Activated CD4-positive, alpha-beta T cell treated with anti-CD3 and anti-CD28 coated beads for 36 hours (primary cell): ENCODE measurements at regions of chr12 and their contacts with region 1.

Region 1: DNA sequence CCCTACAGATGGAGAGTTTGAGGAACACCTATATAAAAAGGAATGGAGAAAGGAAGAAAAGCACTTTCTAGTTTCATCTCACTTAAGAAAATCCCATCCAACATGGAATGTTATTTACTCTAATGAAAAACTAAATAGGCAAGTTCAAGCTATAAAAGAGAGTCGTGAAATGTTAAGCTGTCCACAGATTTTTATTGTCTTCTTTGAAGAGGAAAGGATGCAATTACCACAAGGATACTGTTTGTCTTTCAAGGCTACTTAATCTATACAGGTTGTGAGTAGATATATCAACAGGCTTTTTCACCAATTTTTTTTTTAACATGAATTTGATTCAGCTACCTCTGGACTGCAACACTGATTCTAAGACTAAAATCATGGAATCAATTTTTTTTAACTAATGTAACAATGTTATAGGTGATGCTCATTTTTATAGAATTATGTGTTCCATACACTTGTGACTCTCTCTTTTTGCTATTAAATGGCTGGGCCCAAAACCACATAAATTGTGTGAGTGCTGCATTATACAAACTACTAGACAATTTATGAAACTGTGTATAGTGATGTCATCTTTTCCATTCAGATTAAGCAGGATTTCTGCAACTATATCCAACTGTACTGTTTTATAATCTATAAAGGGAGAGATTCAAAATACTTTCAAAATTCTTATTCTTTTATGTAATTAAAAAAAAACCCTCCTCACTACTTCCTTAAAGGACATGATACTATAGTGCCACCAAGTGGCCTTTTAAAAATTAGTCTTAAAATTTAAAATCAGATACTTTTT is 26.8 kb upstream of the BMAL2 start:
- DNase-seq: no peak
- ATAC-seq: no peak
- H3K4me3 Mint-ChIP-seq: no peak overlapping the region
- H3K27ac Mint-ChIP-seq: no peak overlapping the region
- H3K4me1 Mint-ChIP-seq: peaks cover 5% of the 10 kb centered on the region
- H3K27me3 Mint-ChIP-seq: no peaks in the 10 kb centered on the region

Region 2: GRCh38 chr12:26937875-26938700 is 367.8 kb before region 1 on chr12 and contains the starts of genes FGFR1OP2 and INTS13:
- CTCF ChIA-PET with region 1: interaction called, 3 read pairs
- POLR2A ChIA-PET with region 1: no interaction called
- intact Hi-C with region 1: loop called in 1 of 2 experiments (anchors 10 kb)
- DNase-seq: peak; percentile 99
- ATAC-seq: peak; percentile 92
- H3K4me3 Mint-ChIP-seq: peak within 1 kb of the TSS; percentile 98
- H3K27ac Mint-ChIP-seq: peak within 1 kb of the TSS; percentile 99
- H3K4me1 Mint-ChIP-seq: peaks cover 56% of the 10 kb centered on the region
- H3K27me3 Mint-ChIP-seq: no peaks in the 10 kb centered on the region
- total RNA-seq, gene FGFR1OP2: 38.5 to 43.1 TPM
- total RNA-seq, gene INTS13: 66.3 to 71.5 TPM

Region 3: DNA sequence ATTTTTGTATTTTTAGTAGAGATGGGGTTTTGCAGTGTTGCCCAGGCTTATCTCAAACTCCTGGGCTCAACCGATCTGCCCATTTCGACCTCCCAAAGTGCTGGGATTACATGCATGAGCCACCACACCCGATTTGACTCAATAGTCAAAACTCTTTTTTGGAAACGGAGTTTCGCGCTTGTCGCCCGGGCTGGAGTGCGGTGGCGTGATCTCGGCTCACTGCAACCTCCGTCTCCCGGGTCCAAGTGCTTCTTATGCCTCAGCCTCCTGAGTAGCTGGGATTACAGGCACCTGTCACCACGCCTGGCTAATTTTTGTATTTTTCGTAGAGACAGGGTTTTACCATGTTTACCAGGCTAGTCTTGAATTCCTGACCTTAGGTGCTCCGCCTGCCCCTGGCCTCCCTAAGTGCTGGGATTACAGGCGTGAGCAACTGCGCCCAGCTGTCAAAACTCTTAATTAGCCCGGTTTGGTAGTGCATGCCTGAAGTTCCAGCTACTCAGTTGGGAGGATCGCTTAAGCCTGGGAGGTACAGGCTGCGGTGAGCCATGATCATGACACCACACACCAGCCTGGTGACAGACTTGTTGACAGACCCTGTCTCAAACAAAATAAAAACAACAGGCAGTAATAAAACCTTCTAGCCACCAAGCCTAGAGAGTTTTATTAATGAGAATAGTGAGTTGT is 271.1 kb before region 1 on chr12:
- CTCF ChIA-PET with region 1: interaction called, 16 read pairs
- POLR2A ChIA-PET with region 1: no interaction called
- intact Hi-C with region 1: loop called in 1 of 2 experiments (anchors 1 kb)
- DNase-seq: no peak
- ATAC-seq: no peak
- H3K4me3 Mint-ChIP-seq: no peak overlapping the region
- H3K27ac Mint-ChIP-seq: no peak overlapping the region
- H3K4me1 Mint-ChIP-seq: no peaks in the 10 kb centered on the region
- H3K27me3 Mint-ChIP-seq: no peaks in the 10 kb centered on the region

Region 4: DNA sequence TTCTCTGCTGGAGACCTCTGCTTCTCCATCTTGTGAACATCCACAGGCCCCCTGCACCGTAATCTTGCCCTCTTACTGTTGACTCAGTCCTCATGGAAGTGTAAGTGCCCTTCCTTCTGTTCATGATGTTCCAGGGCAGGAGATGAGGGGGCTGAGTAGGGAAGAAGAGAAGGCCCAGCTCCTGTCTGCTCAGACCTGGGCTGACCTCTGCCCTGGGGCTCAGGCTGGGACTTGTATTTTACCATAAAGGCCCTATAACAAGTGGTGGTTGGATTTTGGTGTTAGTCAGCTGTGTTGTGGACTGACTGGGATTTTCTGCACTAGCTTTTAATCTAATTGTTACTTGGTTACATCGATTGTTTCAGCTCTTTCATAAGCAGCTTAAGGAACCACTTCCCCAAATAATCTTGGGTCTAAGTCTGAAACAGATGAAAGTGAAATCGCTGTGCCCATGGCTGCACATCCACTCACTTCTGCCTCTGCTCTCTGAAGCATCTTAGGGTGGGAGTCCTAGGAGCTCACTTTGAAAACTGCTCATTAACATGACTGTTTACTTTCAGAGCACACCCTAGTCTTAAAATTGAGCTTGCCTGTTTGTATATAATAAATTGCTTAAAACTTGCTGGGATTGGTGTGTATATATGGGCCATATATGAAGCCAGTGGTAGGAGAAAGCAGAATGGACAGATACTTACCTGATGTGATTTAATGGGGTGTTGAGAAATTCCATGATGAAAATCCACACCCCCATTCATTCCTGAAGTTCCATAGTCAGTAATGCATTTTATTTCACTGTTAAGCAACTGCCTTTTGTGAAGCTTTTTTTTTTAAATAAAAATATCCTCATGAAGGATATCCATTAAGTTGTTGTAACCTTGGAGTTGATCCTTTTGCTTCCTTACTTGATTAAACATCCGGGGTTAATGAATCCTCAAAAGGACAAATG is 241.2 kb before region 1 on chr12:
- CTCF ChIA-PET with region 1: no interaction called
- POLR2A ChIA-PET with region 1: no interaction called
- intact Hi-C with region 1: no loop called
- DNase-seq: no peak
- ATAC-seq: no peak
- H3K4me3 Mint-ChIP-seq: no peak overlapping the region
- H3K27ac Mint-ChIP-seq: no peak overlapping the region
- H3K4me1 Mint-ChIP-seq: no peaks in the 10 kb centered on the region
- H3K27me3 Mint-ChIP-seq: no peaks in the 10 kb centered on the region

Region 5: GRCh38 chr12:27277846-27278260 is 28.0 kb before region 1 on chr12:
- CTCF ChIA-PET with region 1: interaction called, 27 read pairs
- POLR2A ChIA-PET with region 1: no interaction called
- intact Hi-C with region 1: no loop called
- DNase-seq: peak; percentile 14
- ATAC-seq: peak; percentile 87
- H3K4me3 Mint-ChIP-seq: no peak overlapping the region
- H3K27ac Mint-ChIP-seq: peak overlapping the region; percentile 5
- H3K4me1 Mint-ChIP-seq: peaks cover 31% of the 10 kb centered on the region
- H3K27me3 Mint-ChIP-seq: no peaks in the 10 kb centered on the region

Region 6: DNA sequence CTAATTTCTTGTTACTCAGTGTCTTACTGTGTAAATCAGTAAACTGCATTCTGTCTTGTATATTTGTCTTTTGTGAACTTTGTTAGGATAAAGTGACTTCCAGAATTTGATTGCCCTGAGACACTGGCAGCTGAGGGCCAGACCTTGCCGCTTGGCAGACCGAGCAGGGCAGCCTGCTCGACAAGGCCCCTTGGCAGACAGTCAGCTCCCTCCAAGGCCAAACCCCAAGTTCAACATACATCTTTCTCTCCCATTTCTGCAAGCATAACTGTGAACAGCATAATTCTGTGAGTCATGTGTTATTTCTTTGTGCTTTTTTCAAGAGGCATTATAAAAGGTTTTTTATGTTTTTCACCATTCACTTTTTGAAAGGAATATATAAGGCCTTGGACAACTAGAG is 12.4 kb before region 1 on chr12:
- CTCF ChIA-PET with region 1: interaction called, 24 read pairs
- POLR2A ChIA-PET with region 1: no interaction called
- intact Hi-C with region 1: no loop called
- DNase-seq: no peak
- ATAC-seq: no peak
- H3K4me3 Mint-ChIP-seq: no peak overlapping the region
- H3K27ac Mint-ChIP-seq: no peak overlapping the region
- H3K4me1 Mint-ChIP-seq: peaks cover 8% of the 10 kb centered on the region
- H3K27me3 Mint-ChIP-seq: no peaks in the 10 kb centered on the region

Region 7: GRCh38 chr12:27453421-27453820 is 147.6 kb after region 1 on chr12:
- CTCF ChIA-PET with region 1: no interaction called
- POLR2A ChIA-PET with region 1: no interaction called
- intact Hi-C with region 1: no loop called
- DNase-seq: no peak
- ATAC-seq: no peak
- H3K4me3 Mint-ChIP-seq: no peak overlapping the region
- H3K27ac Mint-ChIP-seq: no peak overlapping the region
- H3K4me1 Mint-ChIP-seq: peaks cover 7% of the 10 kb centered on the region
- H3K27me3 Mint-ChIP-seq: peaks cover 9% of the 10 kb centered on the region